ENCODE measurements at regions of chr16 and their contacts with region 1.

Region 1: DNA sequence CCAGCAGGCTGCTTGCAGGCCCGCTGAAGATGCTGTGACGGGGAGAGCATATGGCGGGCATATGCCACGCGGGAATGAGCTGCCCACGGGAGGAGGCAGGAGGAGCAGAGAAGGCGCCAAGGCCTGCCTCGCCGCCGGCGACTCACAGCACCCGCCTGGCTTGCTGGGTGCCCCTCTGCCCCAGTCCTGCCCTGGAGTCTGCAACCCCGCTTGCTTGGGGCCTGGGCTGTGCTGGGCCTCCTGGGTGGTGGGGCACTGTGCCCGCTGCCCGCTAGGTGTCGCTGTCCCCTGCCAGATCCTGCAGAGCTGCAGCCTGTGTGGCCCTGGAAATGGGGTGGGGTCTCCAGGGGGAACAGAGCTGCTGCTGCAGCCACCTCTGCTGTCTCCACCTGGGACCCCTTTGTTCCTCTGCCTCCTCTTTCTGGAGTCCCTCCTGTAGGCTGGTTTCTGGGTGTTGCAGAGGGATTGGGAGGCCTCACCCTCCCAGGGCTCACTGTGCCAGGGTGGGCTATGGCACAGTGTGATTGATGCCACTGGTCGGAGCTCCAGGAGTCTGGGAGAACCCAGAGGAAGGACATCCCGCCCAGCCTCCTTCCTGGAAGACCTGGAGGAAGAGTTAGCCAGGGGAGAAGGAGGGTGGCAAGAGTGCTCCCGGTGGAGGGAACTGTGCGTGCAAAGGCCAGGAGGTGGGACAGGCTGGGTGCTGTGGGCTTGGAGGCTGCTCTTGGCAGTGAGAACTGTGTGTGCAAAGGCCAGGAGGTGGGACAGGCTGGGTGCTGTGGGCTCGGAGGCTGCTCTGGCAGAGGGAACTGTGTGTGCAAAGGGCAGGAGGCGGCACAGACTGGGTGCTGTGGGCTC is 141.0 kb upstream of the CIBAR2 start:
- DNase-seq: peak; percentile 71
- ATAC-seq: peak; percentile 76
- H3K4me3 ChIP-seq: no peak overlapping the region
- H3K4me3 Mint-ChIP-seq: no peak overlapping the region
- H3K27ac ChIP-seq: no peak overlapping the region
- H3K27ac Mint-ChIP-seq: peak overlapping the region; percentile 53
- H3K4me1 ChIP-seq: peaks cover under 1 to 6% of the 10 kb centered on the region in 2 donors
- H3K4me1 Mint-ChIP-seq: peaks cover 5% of the 10 kb centered on the region
- H3K27me3 ChIP-seq: peaks cover 0 to 9% (median under 1%) of the 10 kb centered on the region in 4 experiments
- H3K27me3 Mint-ChIP-seq: peaks cover 25% of the 10 kb centered on the region
- CTCF ChIP-seq: peak; percentile 93

Region 2: GRCh38 chr16:85187002-85187401 is 66.3 kb before region 1 on chr16:
- CTCF ChIA-PET with region 1: no interaction called
- POLR2A ChIA-PET with region 1: no interaction called
- intact Hi-C with region 1: no loop called
- DNase-seq: no peak
- ATAC-seq: no peak
- H3K4me3 ChIP-seq: no peak overlapping the region
- H3K4me3 Mint-ChIP-seq: no peak overlapping the region
- H3K27ac ChIP-seq: no peak overlapping the region
- H3K27ac Mint-ChIP-seq: no peak overlapping the region
- H3K4me1 ChIP-seq: no peaks in the 10 kb centered on the region
- H3K4me1 Mint-ChIP-seq: no peaks in the 10 kb centered on the region
- H3K27me3 ChIP-seq: peaks cover 0 to 8% (median 0%) of the 10 kb centered on the region in 4 experiments
- H3K27me3 Mint-ChIP-seq: peaks cover 21% of the 10 kb centered on the region
- CTCF ChIP-seq: no peak

Region 3: DNA sequence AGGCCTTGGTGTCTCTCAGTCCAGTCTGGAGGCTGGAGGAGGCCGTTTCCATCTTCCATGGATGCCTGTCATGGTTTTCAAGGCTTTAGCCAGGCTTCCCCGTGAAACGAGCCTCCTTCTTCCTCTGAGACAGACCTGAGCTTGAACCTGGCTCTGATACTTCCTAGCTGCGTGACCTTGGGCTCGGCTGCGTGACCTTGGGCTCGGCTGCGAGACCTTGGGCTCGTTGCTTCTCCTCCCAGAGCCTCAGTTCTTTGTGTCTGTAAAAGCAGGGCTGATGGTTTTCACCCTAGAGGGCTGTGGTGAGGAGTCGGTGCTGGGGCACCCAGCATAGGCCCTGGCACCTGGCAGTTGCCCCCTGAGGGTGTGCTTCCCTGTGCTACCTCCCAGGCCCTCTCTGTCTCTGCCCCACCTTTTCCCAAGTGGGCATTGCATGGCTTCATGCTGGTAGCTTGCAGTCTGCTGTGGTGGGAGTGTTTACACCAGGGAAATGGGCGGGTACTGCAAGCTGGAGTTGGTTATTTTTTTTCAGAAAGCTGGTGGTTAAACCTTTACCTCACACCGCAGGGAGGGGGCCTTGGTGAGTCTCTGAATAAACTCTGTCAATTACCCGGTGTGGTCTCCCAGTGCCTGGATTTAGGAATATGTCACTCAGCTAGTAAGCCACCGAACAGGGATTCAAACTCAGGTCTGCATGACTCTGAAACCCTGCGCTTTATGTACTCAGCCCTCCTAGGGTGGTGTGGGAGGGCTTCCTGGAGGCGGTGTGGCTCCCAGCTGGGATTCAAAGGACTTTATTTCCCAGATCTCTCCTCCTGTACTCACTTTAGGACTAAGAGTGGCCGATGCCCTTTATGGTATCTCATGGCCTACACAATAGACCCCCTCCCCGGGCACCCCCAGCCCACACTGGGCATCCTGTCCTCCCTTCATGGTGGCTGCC is 12.1 kb before region 1 on chr16:
- CTCF ChIA-PET with region 1: interaction called, 12 read pairs
- POLR2A ChIA-PET with region 1: no interaction called
- intact Hi-C with region 1: no loop called
- DNase-seq: no peak
- ATAC-seq: no peak
- H3K4me3 ChIP-seq: no peak overlapping the region
- H3K4me3 Mint-ChIP-seq: no peak overlapping the region
- H3K27ac ChIP-seq: no peak overlapping the region
- H3K27ac Mint-ChIP-seq: no peak overlapping the region
- H3K4me1 ChIP-seq: peaks cover 6 to 7% of the 10 kb centered on the region in 2 donors
- H3K4me1 Mint-ChIP-seq: peaks cover 5% of the 10 kb centered on the region
- H3K27me3 ChIP-seq: peaks cover 0 to 22% (median 3%) of the 10 kb centered on the region in 4 experiments
- H3K27me3 Mint-ChIP-seq: peaks cover 25% of the 10 kb centered on the region
- CTCF ChIP-seq: no peak

Measured in B cell (primary cell).